GM13977 (cell line): ENCODE measurements at regions of chr1 and their contacts with region 1.

Region 1: GRCh38 chr1:158506369-158506987 is 34.5 kb downstream of the OR10R2 start:
- DNase-seq: peak; percentile 11
- CTCF ChIP-seq: peak; percentile 76

Region 2: GRCh38 chr1:158112994-158113758 is 393.3 kb before region 1 on chr1:
- in situ Hi-C with region 1: no loop called
- DNase-seq: peak; percentile 45
- CTCF ChIP-seq: peak; percentile 37

Region 3: GRCh38 chr1:158998781-158999161 is 492.3 kb after region 1 on chr1:
- in situ Hi-C with region 1: loop called (anchors 25 kb)
- DNase-seq: peak; percentile 46
- CTCF ChIP-seq: peak; percentile 71

Region 4: GRCh38 chr1:159077120-159077961 is 570.9 kb after region 1 on chr1:
- in situ Hi-C with region 1: loop called (anchors 25 kb)
- DNase-seq: peak; percentile 42
- CTCF ChIP-seq: no peak